ENCODE measurements at regions of chr11 and their contacts with region 1.

Region 1: DNA sequence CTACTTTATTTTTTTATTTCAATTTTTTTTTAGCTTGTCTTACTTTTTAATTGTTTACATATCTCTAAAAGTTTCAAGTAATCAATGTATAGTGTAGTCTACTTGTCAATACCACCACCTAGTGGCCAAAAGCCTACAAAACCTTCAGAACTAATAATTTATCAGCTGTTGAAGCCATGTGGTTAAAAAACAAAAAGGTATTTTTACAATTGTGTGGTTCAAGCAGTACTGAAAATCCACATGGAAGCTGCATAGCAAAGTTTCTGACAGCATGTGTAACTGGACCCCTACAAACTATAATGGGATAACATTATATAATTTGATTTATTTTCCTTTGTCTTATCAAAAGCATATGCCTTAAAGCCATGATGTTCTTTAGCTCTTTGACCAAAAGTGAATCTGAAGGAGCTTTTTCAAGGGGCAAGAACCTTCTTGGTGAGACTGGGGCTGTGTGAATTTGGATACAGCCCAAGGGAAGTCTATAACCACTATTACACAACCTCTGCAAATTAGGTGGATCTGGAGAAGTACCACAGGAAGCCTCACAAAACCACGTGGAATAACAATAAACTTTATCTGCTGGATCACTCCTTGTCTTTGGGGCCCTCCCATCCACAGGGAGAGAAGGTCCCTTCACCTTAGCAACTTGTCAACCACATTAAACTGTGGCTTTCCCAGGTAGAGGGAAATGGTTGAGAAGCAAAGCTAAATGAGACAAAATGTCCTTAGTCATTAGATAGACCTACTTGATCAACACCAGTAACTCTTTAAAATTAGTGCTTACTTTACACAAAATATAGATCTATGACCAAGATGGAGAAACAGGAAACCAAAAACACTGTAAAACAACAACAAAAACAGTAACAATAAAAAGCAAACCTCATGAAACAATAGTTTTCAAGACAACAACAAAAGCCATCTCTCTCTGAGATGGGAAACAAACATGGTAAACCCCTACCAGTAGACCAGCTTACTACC is 9.9 kb downstream of the NARS2 start:
- DNase-seq: peak; percentile 55
- H3K4me3 ChIP-seq: no peak overlapping the region
- H3K27me3 ChIP-seq: no peaks in the 10 kb centered on the region
- CTCF ChIP-seq: peak; percentile 59

Region 2: GRCh38 chr11:78149646-78150045 is 415.1 kb before region 1 on chr11:
- CTCF ChIA-PET with region 1: interaction called, 18 read pairs
- POLR2A ChIA-PET with region 1: no interaction called
- DNase-seq: no peak
- H3K4me3 ChIP-seq: no peak overlapping the region
- H3K27me3 ChIP-seq: no peaks in the 10 kb centered on the region
- CTCF ChIP-seq: peak; percentile 43

Region 3: DNA sequence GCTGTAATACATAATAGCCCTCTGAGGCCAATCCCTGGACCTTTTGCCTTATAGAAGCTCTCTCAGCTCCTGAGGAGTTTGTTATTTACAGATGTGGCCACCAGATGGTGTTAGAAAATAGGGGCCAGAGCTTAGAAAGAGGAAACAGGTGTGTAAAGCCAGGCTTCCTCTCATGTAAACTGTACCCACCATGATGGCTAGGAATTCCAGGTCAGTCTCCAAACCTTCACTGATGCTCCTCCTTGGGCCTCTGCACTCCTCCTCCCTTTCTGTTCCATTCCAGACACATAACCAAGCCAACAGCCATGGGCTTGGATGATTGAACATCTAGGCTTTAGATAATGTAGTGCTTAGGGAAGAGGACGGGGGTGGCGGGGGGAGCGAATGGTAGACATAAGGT is 336.3 kb before region 1 on chr11:
- CTCF ChIA-PET with region 1: interaction called, 47 read pairs
- POLR2A ChIA-PET with region 1: no interaction called
- DNase-seq: no peak
- H3K4me3 ChIP-seq: no peak overlapping the region
- H3K27me3 ChIP-seq: no peaks in the 10 kb centered on the region
- CTCF ChIP-seq: peak; percentile 53

Region 4: GRCh38 chr11:78451371-78452150 is 113.2 kb before region 1 on chr11:
- CTCF ChIA-PET with region 1: no interaction called
- POLR2A ChIA-PET with region 1: no interaction called
- DNase-seq: no peak
- H3K4me3 ChIP-seq: no peak overlapping the region
- H3K27me3 ChIP-seq: no peaks in the 10 kb centered on the region
- CTCF ChIP-seq: no peak